Naive thymus-derived CD4-positive, alpha-beta T cell (primary cell): ENCODE measurements at regions of chr2 and their contacts with region 1.

Region 1: GRCh38 chr2:55617175-55618024 is at the start of gene PPP4R3B:
- DNase-seq: peak; percentile 94 to 100 (median 99)
- ATAC-seq: peak; percentile 94
- H3K4me3 ChIP-seq: peak within 1 kb of the TSS; percentile 83
- H3K4me3 Mint-ChIP-seq: no peak within 1 kb of the TSS
- H3K27ac ChIP-seq: peak within 1 kb of the TSS; percentile 99
- H3K27ac Mint-ChIP-seq: no peak within 1 kb of the TSS
- H3K4me1 ChIP-seq: peaks cover 33 to 46% of the 10 kb centered on the region in 2 donors
- H3K4me1 Mint-ChIP-seq: peaks cover 23 to 67% (median 30%) of the 10 kb centered on the region in 7 donors
- H3K27me3 ChIP-seq: no peaks in the 10 kb centered on the region
- H3K27me3 Mint-ChIP-seq: no peaks in the 10 kb centered on the region
- total RNA-seq, gene PPP4R3B: 67.2 to 113 (median 88.0) TPM

Region 2: GRCh38 chr2:53970724-53971602 is 1646.4 kb before region 1 on chr2 and contains the start of gene PSME4:
- CTCF ChIA-PET with region 1: no interaction called
- POLR2A ChIA-PET with region 1: no interaction called
- intact Hi-C with region 1: loop called (anchors 2 to 10 kb)
- DNase-seq: peak; percentile 80 to 95 (median 90)
- ATAC-seq: peak; percentile 97
- H3K4me3 ChIP-seq: peak within 1 kb of the TSS; percentile 84
- H3K4me3 Mint-ChIP-seq: peak within 1 kb of the TSS; percentile 89 to 100 (median 96)
- H3K27ac ChIP-seq: peak within 1 kb of the TSS; percentile 93
- H3K27ac Mint-ChIP-seq: peak within 1 kb of the TSS; percentile 91 to 99 (median 95)
- H3K4me1 ChIP-seq: peaks cover 17 to 21% of the 10 kb centered on the region in 2 donors
- H3K4me1 Mint-ChIP-seq: peaks cover 37 to 65% (median 54%) of the 10 kb centered on the region in 7 donors
- H3K27me3 ChIP-seq: no peaks in the 10 kb centered on the region
- H3K27me3 Mint-ChIP-seq: no peaks in the 10 kb centered on the region
- total RNA-seq, gene PSME4: 48.8 to 80.1 (median 54.4) TPM

Region 3: DNA sequence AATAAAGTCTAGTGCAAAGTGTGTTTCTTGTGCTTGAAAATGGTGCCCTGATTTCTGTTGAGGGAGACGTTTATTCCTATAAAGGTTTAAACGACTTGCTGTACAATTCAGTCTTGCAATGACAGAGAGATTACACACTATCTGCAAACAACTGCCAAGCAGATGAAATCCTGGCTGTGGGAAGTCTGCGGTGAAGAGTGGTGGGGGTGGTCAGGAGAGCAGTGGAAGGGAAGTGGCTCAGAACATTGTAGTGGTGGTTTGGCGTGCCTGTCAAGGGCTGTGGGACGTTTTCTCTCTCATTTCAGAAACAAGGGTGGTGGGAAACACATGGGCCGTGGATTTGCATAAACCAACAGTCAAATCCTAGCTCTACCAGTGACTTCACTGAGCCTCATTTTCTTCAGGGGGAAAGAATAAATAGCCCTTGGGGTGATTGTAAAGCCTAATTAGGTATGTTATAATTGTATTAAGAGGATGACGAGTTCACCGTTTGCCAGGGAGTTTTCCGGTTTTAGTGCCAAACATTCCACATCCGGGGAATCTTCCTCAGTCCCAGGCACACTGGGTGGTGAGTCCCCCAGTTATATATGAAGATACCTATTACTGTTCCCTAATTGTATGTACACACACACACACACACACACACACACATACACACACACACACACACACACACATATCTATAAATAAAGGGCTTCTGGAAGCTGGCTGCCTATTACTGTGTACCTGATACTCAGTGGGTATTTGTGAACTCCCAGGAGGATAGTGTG is 1046.3 kb before region 1 on chr2:
- CTCF ChIA-PET with region 1: no interaction called
- POLR2A ChIA-PET with region 1: interaction called, 3 read pairs
- intact Hi-C with region 1: loop called (anchors 5 kb)
- DNase-seq: peak in 8 of 9 donors; percentile 61 to 84 (median 68)
- ATAC-seq: peak; percentile 24
- H3K4me3 ChIP-seq: peak overlapping the region; percentile 58
- H3K4me3 Mint-ChIP-seq: peak overlapping the region; percentile 72 to 94 (median 88)
- H3K27ac ChIP-seq: peak overlapping the region; percentile 95
- H3K27ac Mint-ChIP-seq: peak overlapping the region; percentile 90 to 99 (median 97)
- H3K4me1 ChIP-seq: peaks cover 76 to 91% of the 10 kb centered on the region in 2 donors
- H3K4me1 Mint-ChIP-seq: peaks cover 68 to 100% (median 93%) of the 10 kb centered on the region in 7 donors
- H3K27me3 ChIP-seq: no peaks in the 10 kb centered on the region
- H3K27me3 Mint-ChIP-seq: no peaks in the 10 kb centered on the region

Region 4: DNA sequence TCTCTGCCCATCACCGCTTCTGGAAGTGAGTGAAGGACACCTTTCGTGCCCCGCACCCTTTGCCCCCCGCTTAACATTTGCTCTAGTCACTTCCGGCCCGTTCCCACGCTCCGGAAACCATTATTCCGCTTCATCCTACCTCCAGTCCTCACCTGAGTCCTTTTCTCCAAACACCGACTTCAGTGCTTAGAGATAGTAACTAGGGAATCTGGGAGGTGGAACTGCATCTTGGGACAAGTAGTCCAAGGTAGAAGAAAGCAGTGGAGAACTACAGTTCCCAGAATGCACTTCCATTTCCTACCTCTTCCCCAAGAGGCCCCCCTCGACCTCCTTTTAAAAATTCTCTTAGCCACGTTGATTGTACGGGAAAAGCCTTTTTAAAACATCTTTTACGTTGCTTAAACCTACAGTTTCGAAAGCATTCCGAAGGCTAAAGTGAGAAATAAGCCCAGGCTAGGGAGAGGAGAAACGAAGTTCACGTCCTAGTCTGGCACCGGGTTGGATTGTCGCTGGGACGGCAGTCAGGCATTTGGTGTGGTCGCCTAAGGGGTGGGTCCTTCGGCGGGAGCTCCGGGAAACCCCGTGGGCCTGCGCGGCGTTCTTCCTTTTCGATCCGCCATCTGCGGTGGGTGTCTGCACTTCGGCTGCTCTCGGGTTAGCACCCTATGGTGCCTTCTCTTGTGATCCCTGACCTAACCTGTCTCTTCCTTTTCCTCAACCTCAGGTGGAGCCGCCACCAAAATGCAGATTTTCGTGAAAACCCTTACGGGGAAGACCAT is 385.1 kb before region 1 on chr2 and contains the starts of genes CLHC1 and RPS27A:
- CTCF ChIA-PET with region 1: no interaction called
- POLR2A ChIA-PET with region 1: interaction called, 3 read pairs
- intact Hi-C with region 1: loop called (anchors 1 kb)
- DNase-seq: peak; percentile 90 to 97 (median 93)
- ATAC-seq: peak; percentile 95
- H3K4me3 ChIP-seq: peak within 1 kb of the TSS; percentile 75
- H3K4me3 Mint-ChIP-seq: peak within 1 kb of the TSS; percentile 96 to 100 (median 100)
- H3K27ac ChIP-seq: peak within 1 kb of the TSS; percentile 99
- H3K27ac Mint-ChIP-seq: peak within 1 kb of the TSS; percentile 96 to 99 (median 99)
- H3K4me1 ChIP-seq: peaks cover 26 to 30% of the 10 kb centered on the region in 2 donors
- H3K4me1 Mint-ChIP-seq: peaks cover 41 to 84% (median 63%) of the 10 kb centered on the region in 7 donors
- H3K27me3 ChIP-seq: no peaks in the 10 kb centered on the region
- H3K27me3 Mint-ChIP-seq: no peaks in the 10 kb centered on the region
- total RNA-seq, gene CLHC1: 5.3 to 19.5 (median 15.1) TPM
- total RNA-seq, gene RPS27A: 948 to 2,409 (median 2,155) TPM

Region 5: DNA sequence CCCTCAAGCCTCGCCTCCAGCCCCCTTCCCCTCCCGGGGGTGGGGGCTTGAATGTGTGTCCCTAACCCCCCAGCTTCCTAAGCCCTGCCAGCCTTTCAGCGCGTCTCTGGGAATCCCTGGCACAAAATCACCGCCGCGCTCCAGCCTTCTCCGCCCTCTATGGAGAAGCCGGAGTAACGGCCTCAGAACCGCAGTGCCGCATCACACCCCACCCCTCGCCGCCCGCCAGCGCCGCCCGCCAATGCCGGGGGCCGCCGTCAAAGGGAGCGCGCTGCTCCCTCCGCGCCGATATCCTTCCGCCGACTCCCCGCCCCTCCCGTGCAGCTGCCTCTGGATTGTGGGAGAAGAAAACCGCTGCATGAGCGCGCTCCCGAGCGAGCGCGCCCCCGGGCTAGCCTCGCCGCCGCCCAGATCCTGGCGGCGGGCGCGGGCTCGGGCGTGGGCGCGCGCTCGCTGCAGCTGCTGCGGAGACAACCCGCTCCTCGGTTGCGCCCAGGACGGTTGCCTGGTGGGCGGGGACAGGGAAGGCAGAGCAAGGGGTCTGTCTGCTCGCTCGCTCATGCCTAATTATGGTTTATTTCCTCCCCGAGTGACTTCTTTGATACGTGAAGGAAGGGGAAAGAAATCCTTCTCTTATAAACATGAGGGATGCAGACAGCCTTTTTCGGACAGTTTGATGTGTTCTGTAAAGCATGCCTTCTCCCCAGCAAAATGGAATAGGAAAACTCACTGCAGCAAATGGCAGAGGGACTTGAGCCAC is 197.5 kb before region 1 on chr2 and contains the start of gene CCDC88A:
- CTCF ChIA-PET with region 1: no interaction called
- POLR2A ChIA-PET with region 1: interaction called, 8 read pairs
- intact Hi-C with region 1: loop called (anchors 1 kb)
- DNase-seq: peak; percentile 78 to 91 (median 85)
- ATAC-seq: peak; percentile 92
- H3K4me3 ChIP-seq: peak within 1 kb of the TSS; percentile 91
- H3K4me3 Mint-ChIP-seq: peak within 1 kb of the TSS; percentile 86 to 98 (median 94)
- H3K27ac ChIP-seq: peak within 1 kb of the TSS; percentile 69
- H3K27ac Mint-ChIP-seq: peak within 1 kb of the TSS; percentile 50 to 97 (median 85)
- H3K4me1 ChIP-seq: peaks cover 0 to 6% of the 10 kb centered on the region in 2 donors
- H3K4me1 Mint-ChIP-seq: peaks cover 5 to 49% (median 41%) of the 10 kb centered on the region in 7 donors
- H3K27me3 ChIP-seq: no peaks in the 10 kb centered on the region
- H3K27me3 Mint-ChIP-seq: peaks cover 0 to 40% (median 0%) of the 10 kb centered on the region in 5 donors
- total RNA-seq, gene CCDC88A: 9.9 to 53.3 (median 15.9) TPM

Region 6: DNA sequence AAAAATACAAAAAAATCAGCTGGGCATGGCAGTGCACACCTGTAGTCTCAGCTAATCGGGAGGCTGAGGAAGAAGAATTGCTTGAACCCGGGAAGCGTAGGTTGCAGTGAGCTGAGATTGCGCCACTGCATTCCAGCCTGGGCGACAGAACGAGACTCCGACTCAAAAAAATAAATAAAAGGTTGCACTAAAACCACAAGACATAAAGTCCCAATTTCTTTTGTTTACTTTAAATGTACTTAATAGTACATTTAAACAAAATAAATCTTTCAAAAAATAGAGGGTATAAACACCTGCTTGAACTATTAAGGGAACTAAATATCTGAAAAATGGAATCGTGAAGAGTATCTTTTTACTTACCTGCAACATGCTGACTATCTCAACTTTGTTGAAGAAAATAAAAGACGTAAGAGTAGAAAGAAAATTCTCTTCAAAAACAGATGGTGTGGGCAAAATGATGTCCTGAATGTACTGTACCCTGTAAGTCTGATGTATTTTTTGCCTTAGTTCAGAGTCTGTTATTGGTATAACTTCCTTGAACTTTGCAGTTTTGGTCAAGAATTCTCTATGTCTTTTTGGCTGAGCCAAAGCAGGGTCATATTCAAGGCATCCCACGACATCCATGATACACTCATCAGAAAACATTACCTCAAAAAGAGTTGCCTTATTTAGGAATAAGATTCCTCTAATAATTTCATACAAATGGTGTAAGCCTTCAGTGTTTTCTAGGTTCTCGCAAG is 19.2 kb before region 1 on chr2:
- CTCF ChIA-PET with region 1: interaction called, 4 read pairs
- POLR2A ChIA-PET with region 1: interaction called, 11 read pairs
- intact Hi-C with region 1: loop called in 1 of 2 experiments (anchors 2 kb)
- DNase-seq: no peak
- ATAC-seq: no peak
- H3K4me3 ChIP-seq: no peak overlapping the region
- H3K4me3 Mint-ChIP-seq: no peak overlapping the region
- H3K27ac ChIP-seq: no peak overlapping the region
- H3K27ac Mint-ChIP-seq: peak overlapping the region in 2 of 9 donors; percentile 32 to 41
- H3K4me1 ChIP-seq: no peaks in the 10 kb centered on the region
- H3K4me1 Mint-ChIP-seq: peaks cover 20 to 67% (median 54%) of the 10 kb centered on the region in 7 donors
- H3K27me3 ChIP-seq: no peaks in the 10 kb centered on the region
- H3K27me3 Mint-ChIP-seq: no peaks in the 10 kb centered on the region

Region 7: GRCh38 chr2:56918790-56919189 is 1301.4 kb after region 1 on chr2:
- CTCF ChIA-PET with region 1: no interaction called
- POLR2A ChIA-PET with region 1: no interaction called
- intact Hi-C with region 1: no loop called
- DNase-seq: no peak
- ATAC-seq: no peak
- H3K4me3 ChIP-seq: no peak overlapping the region
- H3K4me3 Mint-ChIP-seq: no peak overlapping the region
- H3K27ac ChIP-seq: no peak overlapping the region
- H3K27ac Mint-ChIP-seq: no peak overlapping the region
- H3K4me1 ChIP-seq: no peaks in the 10 kb centered on the region
- H3K4me1 Mint-ChIP-seq: peaks cover 0 to 3% (median 0%) of the 10 kb centered on the region in 7 donors
- H3K27me3 ChIP-seq: no peaks in the 10 kb centered on the region
- H3K27me3 Mint-ChIP-seq: no peaks in the 10 kb centered on the region